Gastrocnemius medialis (tissue), 4 donors: ENCODE measurements at regions of chr2 and their contacts with region 1.

Region 1: GRCh38 chr2:237196866-237197618 is 111.4 kb downstream of the COPS8 start:
- DNase-seq: no peak
- ATAC-seq: peak in 1 of 2 donors; percentile 21
- H3K4me3 ChIP-seq: no peak overlapping the region
- H3K27ac ChIP-seq: peak overlapping the region in 3 of 4 donors; percentile 2 to 47 (median 5)
- H3K4me1 ChIP-seq: peaks cover 0 to 4% of the 10 kb centered on the region in 2 donors
- H3K27me3 ChIP-seq: no peaks in the 10 kb centered on the region
- CTCF ChIP-seq: no peak
- POLR2A ChIP-seq: no peak

Region 2: DNA sequence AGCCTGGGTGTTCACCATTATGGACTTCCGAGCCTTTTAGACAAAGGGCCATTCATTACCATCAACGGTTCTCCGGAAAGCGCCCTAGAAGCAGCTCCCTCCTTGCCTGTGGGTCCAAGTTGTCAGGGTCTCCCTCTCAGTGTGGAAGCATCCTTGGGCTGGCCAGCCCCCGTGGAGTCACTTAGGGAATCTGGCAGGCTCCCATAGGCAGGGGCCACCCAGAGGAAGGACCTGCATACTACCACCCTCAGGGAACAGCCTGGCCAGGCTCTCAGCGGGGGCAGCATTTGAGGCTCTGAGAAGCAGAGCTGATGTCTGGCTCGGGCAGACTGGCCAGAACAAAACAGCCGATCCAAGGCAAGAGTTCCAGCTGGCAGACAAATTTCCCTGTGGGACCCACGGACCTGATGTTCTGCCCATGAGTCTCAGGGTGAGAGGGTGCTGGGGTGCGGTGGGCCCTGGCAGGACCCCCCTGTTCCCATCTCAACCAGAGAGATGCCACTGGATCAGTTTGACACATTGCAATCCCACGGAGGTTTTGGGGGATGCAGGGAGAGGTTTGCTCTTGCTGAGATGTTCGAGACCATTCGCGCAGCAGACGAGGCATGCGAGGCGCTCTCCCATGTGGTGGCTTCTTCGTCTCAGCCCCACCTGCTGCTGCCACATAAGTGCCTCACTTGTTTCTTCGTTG is 570.5 kb before region 1 on chr2:
- in situ Hi-C with region 1: no loop called
- intact Hi-C with region 1: no loop called
- DNase-seq: no peak
- ATAC-seq: no peak
- H3K4me3 ChIP-seq: no peak overlapping the region
- H3K27ac ChIP-seq: no peak overlapping the region
- H3K4me1 ChIP-seq: no peaks in the 10 kb centered on the region
- H3K27me3 ChIP-seq: no peaks in the 10 kb centered on the region
- CTCF ChIP-seq: no peak
- POLR2A ChIP-seq: no peak

Region 3: DNA sequence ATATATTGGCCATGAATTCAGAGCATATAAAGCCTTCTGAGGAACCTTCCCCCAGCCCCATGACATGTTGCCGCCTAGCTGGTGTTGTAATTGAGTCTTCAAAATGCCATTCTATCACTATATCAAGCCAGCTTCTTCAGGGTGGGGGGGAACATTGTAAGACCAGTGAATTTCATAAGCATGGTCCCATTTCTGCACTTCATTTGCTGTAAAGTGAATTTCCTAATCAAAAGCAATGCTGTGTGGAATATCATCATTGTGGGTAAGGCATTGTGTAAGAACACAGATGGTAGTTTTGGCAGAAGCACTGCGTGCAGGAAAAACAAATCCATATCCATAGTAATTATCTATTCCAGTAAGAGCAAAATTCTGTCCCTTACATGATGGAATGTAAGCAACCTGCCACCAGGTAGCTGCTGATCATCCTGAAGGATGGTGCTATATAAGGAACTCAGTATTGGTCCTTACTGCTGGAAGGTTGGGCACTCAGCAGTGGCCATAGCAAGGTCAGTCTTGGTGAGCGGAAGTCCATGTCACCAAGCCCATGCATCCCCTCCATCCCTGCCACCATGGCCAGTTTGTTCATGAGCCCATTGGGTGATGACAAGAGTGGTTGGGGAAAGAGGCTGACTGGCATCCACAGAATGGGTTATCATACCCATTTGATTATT is 48.1 kb after region 1 on chr2:
- in situ Hi-C with region 1: no loop called
- intact Hi-C with region 1: loop called (anchors 10 kb)
- DNase-seq: no peak
- ATAC-seq: peak; percentile 75 to 89
- H3K4me3 ChIP-seq: no peak overlapping the region
- H3K27ac ChIP-seq: peak overlapping the region; percentile 42 to 57 (median 50)
- H3K4me1 ChIP-seq: no peaks in the 10 kb centered on the region
- H3K27me3 ChIP-seq: no peaks in the 10 kb centered on the region
- CTCF ChIP-seq: no peak
- POLR2A ChIP-seq: no peak

Region 4: DNA sequence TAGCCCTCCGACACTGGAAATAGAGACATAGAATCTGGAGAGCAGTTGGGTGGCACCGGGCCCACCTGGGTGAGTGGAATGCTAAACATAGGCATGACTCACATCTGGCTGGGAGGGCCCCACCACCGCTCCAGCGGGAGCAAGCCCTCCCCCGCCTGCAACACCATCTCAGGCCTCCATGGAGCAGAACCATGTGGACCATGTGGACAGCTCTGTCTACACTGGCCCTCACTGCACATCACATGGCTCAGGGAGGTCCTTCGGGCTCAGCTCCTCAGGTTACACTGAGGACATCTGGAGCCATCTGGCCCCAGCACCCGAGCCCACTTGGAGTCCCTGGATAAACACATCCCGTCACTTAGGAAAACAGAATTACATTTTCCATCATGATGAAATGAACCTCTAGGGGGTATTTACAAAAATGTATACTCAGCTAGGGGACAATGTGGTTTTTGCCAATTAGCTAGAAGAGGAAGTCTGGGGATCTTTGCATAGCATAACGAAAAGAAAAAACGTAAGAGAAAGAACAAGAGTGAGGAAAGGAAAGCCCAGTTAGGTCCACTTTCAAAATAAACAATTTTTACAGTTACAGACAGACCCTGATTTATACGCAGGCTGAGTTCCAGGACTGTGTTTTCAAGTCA is 259.3 kb after region 1 on chr2:
- in situ Hi-C with region 1: no loop called
- intact Hi-C with region 1: no loop called
- DNase-seq: peak; percentile 92 to 98
- ATAC-seq: peak; percentile 84 to 87
- H3K4me3 ChIP-seq: no peak overlapping the region
- H3K27ac ChIP-seq: peak overlapping the region; percentile 71 to 85 (median 81)
- H3K4me1 ChIP-seq: peaks cover 26 to 38% of the 10 kb centered on the region in 2 donors
- H3K27me3 ChIP-seq: no peaks in the 10 kb centered on the region
- CTCF ChIP-seq: no peak
- POLR2A ChIP-seq: no peak